BJ (cell line): ENCODE measurements at regions of chr10 and their contacts with region 1.

Region 1: DNA sequence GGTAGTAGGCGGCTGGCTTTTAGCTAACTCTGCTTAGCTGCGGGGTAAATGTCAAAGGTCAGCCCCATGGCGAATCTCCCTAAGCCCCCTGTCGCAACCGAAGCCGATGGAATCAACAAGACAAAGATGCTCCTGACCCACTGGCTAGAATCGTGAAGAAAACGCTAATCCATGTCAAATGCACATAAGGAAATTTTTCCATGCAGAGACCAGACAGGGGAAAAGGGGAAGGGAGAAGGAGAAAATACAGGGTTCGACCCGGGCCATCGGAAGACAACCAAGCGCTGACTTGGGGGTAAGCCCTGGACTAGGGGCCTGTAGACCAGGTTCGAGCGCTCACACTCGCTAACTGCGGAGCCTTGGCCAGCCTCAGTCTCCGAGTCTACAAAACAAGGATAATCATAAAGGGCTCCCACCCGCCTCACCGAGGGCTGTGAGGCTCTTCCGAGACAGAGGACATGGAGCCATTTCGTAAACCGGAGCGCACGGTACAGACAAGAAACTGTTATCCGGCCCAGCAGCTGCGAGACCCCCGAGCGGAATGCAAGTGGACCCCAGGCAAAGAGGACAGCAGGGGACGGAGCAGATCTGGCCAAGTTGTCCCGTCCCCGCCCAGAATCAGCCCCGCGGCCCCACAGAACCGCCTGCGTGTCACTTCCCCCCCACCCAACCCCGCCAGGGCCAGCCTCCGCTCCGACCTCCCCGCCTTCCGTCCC is 507 bp downstream of the SAR1A start:
- DNase-seq: no peak
- H3K4me3 ChIP-seq: peak overlapping the region; percentile 82
- H3K27me3 ChIP-seq: no peaks in the 10 kb centered on the region
- CTCF ChIP-seq: no peak

Region 2: DNA sequence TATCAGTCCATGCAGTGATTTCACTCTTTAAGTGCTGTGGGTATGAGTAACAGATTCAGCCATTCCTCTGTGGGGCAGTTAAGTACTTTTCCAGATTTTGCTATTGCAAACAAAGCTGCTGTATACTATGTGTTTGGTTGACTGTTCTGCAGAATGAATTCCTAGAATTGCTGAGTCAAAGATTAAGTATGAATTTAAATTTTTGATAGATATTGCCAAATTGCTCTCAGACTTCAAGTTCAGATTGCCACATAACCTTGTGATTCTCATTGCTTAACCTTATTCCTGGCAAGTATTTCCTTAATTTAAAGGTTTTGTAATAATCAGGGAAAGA is 22.1 kb after region 1 on chr10:
- CTCF ChIA-PET with region 1: interaction called, 5 read pairs
- POLR2A ChIA-PET with region 1: interaction called, 12 read pairs
- DNase-seq: peak; percentile 94
- H3K4me3 ChIP-seq: no peak overlapping the region
- H3K27me3 ChIP-seq: no peaks in the 10 kb centered on the region
- CTCF ChIP-seq: no peak

Region 3: GRCh38 chr10:70206762-70207161 is 37.0 kb after region 1 on chr10:
- CTCF ChIA-PET with region 1: no interaction called
- POLR2A ChIA-PET with region 1: interaction called, 22 read pairs
- DNase-seq: no peak
- H3K4me3 ChIP-seq: no peak overlapping the region
- H3K27me3 ChIP-seq: no peaks in the 10 kb centered on the region
- CTCF ChIP-seq: no peak

Region 4: DNA sequence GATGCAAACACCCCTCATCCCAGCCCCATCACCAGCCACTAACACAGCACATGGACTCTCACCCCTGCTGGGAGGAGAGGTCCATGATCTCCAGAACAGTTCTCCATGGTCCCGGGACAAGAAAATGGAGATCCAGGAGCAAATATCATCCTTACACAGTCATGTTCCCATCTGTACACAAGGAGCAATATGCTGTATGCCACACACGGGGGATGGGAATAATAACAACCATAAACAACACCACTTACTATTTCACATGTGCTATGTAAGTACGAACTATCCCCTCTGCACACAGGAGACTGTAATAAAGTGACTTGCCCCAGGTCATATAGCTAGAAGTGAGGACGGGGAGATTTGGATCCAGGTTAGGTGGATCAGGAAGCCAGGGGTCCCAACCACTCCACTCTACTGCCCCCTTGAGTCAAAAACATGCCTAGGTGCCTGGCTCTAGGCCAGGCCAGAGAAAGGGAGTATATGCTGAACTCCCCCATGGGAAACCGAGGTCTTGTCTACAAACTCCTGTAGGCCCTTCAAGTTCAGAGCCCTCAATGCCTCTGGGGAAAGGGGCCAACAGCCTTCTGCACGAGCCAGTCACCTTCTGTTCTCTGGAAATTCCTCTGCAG is 178.5 kb after region 1 on chr10:
- CTCF ChIA-PET with region 1: no interaction called
- POLR2A ChIA-PET with region 1: no interaction called
- DNase-seq: no peak
- H3K4me3 ChIP-seq: no peak overlapping the region
- H3K27me3 ChIP-seq: no peaks in the 10 kb centered on the region
- CTCF ChIP-seq: peak; percentile 73